Gastrocnemius medialis (tissue), 4 donors: ENCODE measurements at regions of chr14 and their contacts with region 1.

Region 1: GRCh38 chr14:77314043-77314442 is 6.6 kb downstream of the POMT2 start:
- DNase-seq: peak; percentile 49 to 51
- ATAC-seq: peak; percentile 47 to 76
- H3K4me3 ChIP-seq: no peak overlapping the region
- H3K27ac ChIP-seq: peak overlapping the region; percentile 84 to 96 (median 89)
- H3K4me1 ChIP-seq: peaks cover 73 to 88% of the 10 kb centered on the region in 2 donors
- H3K27me3 ChIP-seq: no peaks in the 10 kb centered on the region
- CTCF ChIP-seq: no peak
- POLR2A ChIP-seq: peak in 1 of 2 donors; percentile 67

Region 2: GRCh38 chr14:76151398-76152339 is 1162.4 kb before region 1 on chr14 and contains the start of gene GPATCH2L:
- in situ Hi-C with region 1: no loop called
- intact Hi-C with region 1: loop called (anchors 10 kb)
- DNase-seq: peak; percentile 89 to 95
- ATAC-seq: peak; percentile 90 to 95
- H3K4me3 ChIP-seq: peak within 1 kb of the TSS; percentile 81 to 99 (median 92)
- H3K27ac ChIP-seq: peak within 1 kb of the TSS; percentile 83 to 95 (median 94)
- H3K4me1 ChIP-seq: peaks cover 42 to 44% of the 10 kb centered on the region in 2 donors
- H3K27me3 ChIP-seq: no peaks in the 10 kb centered on the region
- CTCF ChIP-seq: no peak
- POLR2A ChIP-seq: peak; percentile 93
- total RNA-seq, gene GPATCH2L: 24.6 to 63.5 (median 41.9) TPM

Region 3: DNA sequence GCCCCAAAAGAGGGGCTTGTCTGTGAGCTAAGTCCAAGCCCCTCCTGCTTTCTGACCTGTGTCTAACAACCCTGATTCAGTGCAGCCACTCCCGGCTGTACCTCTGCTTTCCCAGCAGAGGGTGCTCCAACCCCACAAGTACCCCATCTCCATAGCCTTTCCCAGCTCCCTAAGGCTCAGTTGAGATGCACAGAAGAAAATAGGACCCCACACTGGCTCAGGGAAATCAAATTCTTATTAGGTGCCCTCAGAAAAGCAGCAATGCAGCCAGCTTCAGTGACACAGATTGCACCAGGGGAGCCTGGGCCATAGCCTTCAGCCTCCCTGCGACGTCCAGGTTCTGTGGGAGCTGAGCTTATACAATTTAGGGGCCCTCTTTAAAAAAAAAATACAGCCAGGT is 438.0 kb before region 1 on chr14:
- in situ Hi-C with region 1: loop called in 1 of 4 experiments (anchors 10 kb)
- intact Hi-C with region 1: no loop called
- DNase-seq: peak; percentile 31 to 51
- ATAC-seq: peak; percentile 84 to 87
- H3K4me3 ChIP-seq: no peak overlapping the region
- H3K27ac ChIP-seq: no peak overlapping the region
- H3K4me1 ChIP-seq: no peaks in the 10 kb centered on the region
- H3K27me3 ChIP-seq: no peaks in the 10 kb centered on the region
- CTCF ChIP-seq: peak; percentile 86 to 95 (median 90)
- POLR2A ChIP-seq: no peak

Region 4: GRCh38 chr14:76918751-76919543 is 395.1 kb before region 1 on chr14:
- in situ Hi-C with region 1: no loop called
- intact Hi-C with region 1: loop called (anchors 5 kb)
- DNase-seq: peak; percentile 96 to 99
- ATAC-seq: peak; percentile 71 to 72
- H3K4me3 ChIP-seq: peak overlapping the region; percentile 7 to 49 (median 32)
- H3K27ac ChIP-seq: peak overlapping the region; percentile 90 to 98 (median 94)
- H3K4me1 ChIP-seq: peaks cover 49% of the 10 kb centered on the region in 2 donors
- H3K27me3 ChIP-seq: no peaks in the 10 kb centered on the region
- CTCF ChIP-seq: no peak
- POLR2A ChIP-seq: peak in 1 of 2 donors; percentile 40

Region 5: DNA sequence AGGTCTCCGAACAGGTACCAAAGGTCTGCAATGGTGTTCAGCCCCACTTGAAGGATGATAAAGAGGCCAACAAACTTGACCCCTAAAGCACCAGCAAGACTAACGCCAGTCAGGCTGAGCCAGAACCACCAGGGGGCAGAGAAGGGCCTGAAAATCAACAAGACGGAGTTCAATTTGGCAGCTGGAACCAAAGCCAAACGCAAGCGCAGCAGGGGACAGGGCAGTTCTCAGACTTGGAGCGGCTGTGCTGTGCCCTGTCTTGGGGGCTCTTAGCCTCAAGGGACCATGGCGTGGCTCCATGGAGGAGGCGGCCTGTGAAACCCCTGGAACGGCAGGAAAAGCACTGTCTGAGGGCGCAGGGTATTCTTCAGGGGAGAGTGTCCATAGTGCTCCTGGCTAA is 12.9 kb before region 1 on chr14:
- in situ Hi-C with region 1: no loop called
- intact Hi-C with region 1: loop called (anchors 1 kb)
- DNase-seq: peak; percentile 82 to 87
- ATAC-seq: peak; percentile 65 to 73
- H3K4me3 ChIP-seq: peak overlapping the region in 1 of 4 donors; percentile 13
- H3K27ac ChIP-seq: peak overlapping the region; percentile 24 to 97 (median 96)
- H3K4me1 ChIP-seq: peaks cover 46 to 52% of the 10 kb centered on the region in 2 donors
- H3K27me3 ChIP-seq: no peaks in the 10 kb centered on the region
- CTCF ChIP-seq: peak; percentile 80 to 95 (median 86)
- POLR2A ChIP-seq: no peak

Region 6: GRCh38 chr14:77707724-77708408 is 393.8 kb after region 1 on chr14 and contains the starts of genes ALKBH1 and SLIRP:
- in situ Hi-C with region 1: no loop called
- intact Hi-C with region 1: loop called (anchors 10 kb)
- DNase-seq: peak; percentile 81
- ATAC-seq: peak; percentile 98
- H3K4me3 ChIP-seq: peak within 1 kb of the TSS; percentile 81 to 97 (median 92)
- H3K27ac ChIP-seq: peak within 1 kb of the TSS; percentile 74 to 87 (median 80)
- H3K4me1 ChIP-seq: peaks cover 31 to 34% of the 10 kb centered on the region in 2 donors
- H3K27me3 ChIP-seq: no peaks in the 10 kb centered on the region
- CTCF ChIP-seq: peak in 1 of 5 experiments; percentile 6
- POLR2A ChIP-seq: peak; percentile 65 to 76
- total RNA-seq, gene ALKBH1: 12.2 to 16.2 (median 13.6) TPM
- total RNA-seq, gene SLIRP: 293 to 550 (median 332) TPM